T-cell (primary cell): ENCODE measurements at regions of chr1 and their contacts with region 1.

Region 1: GRCh38 chr1:116724765-116725375 is 29.4 kb upstream of the CD2 start:
- DNase-seq: peak; percentile 46 to 89 (median 71)
- ATAC-seq: peak; percentile 61 to 68 (median 62)
- H3K4me3 ChIP-seq: no peak overlapping the region
- H3K4me3 Mint-ChIP-seq: no peak overlapping the region
- H3K27ac ChIP-seq: no peak overlapping the region
- H3K27ac Mint-ChIP-seq: no peak overlapping the region
- H3K4me1 ChIP-seq: peaks cover 0 to 10% of the 10 kb centered on the region in 2 experiments
- H3K4me1 Mint-ChIP-seq: peaks cover 10 to 18% (median 17%) of the 10 kb centered on the region in 3 donors
- H3K27me3 ChIP-seq: peaks cover 0 to 2% of the 10 kb centered on the region in 2 experiments
- H3K27me3 Mint-ChIP-seq: no peaks in the 10 kb centered on the region

Region 2: DNA sequence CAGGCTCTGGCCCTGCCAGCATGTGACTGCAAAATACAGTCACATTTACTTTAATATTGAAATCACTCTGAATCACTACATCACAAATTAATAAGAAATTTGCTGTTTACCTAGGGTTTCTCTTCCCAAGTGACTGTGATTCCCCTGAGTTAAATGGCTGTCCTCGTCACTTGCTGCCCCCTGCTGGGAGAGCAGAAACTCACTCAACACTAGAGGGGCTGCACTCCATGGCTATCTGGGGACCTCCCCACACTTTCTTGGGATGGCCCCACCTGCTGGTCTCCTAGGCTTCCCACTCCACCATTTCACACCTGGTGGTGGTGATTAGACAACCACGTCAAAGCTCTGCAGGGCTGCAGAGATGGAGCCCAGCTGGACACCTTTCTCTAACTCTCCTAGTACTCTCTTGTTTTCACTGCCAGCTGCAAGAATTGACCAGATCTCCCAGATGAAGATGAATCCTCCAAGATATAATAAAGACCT is 92.8 kb after region 1 on chr1:
- CTCF ChIA-PET with region 1: interaction called in 1 of 2 experiments, 12 read pairs
- POLR2A ChIA-PET with region 1: no interaction called
- DNase-seq: peak; percentile 39 to 86 (median 60)
- ATAC-seq: peak; percentile 71 to 77 (median 74)
- H3K4me3 ChIP-seq: no peak overlapping the region
- H3K4me3 Mint-ChIP-seq: peak overlapping the region in 2 of 3 donors; percentile 34 to 70
- H3K27ac ChIP-seq: peak overlapping the region; percentile 61
- H3K27ac Mint-ChIP-seq: peak overlapping the region; percentile 64 to 80
- H3K4me1 ChIP-seq: peaks cover 23 to 27% of the 10 kb centered on the region in 2 experiments
- H3K4me1 Mint-ChIP-seq: peaks cover 28 to 33% (median 32%) of the 10 kb centered on the region in 3 donors
- H3K27me3 ChIP-seq: no peaks in the 10 kb centered on the region
- H3K27me3 Mint-ChIP-seq: no peaks in the 10 kb centered on the region

Region 3: DNA sequence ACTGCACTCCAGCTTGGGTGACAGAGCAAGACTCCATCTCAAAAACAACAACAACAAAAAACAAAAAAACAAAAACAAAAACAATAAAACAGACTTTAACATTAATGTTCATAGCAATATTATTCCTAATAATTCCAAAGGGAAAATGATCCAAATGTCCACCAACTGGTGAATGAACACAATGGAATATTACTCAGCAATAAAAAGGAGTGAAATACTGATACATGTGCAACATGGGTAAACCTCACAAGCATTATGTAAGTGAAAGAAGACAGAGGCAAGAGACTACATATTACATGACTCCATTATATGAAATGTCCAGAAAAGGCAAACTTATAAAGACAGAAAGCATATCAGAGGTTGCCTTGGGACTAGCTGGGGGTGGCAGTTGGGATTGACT is 329.2 kb after region 1 on chr1:
- CTCF ChIA-PET with region 1: interaction called, 8 to 10 read pairs
- POLR2A ChIA-PET with region 1: interaction called, 7 read pairs
- DNase-seq: no peak
- ATAC-seq: no peak
- H3K4me3 ChIP-seq: no peak overlapping the region
- H3K4me3 Mint-ChIP-seq: no peak overlapping the region
- H3K27ac ChIP-seq: no peak overlapping the region
- H3K27ac Mint-ChIP-seq: no peak overlapping the region
- H3K4me1 ChIP-seq: peaks cover 19 to 32% of the 10 kb centered on the region in 2 experiments
- H3K4me1 Mint-ChIP-seq: peaks cover 48 to 53% (median 51%) of the 10 kb centered on the region in 3 donors
- H3K27me3 ChIP-seq: no peaks in the 10 kb centered on the region
- H3K27me3 Mint-ChIP-seq: no peaks in the 10 kb centered on the region

Region 4: DNA sequence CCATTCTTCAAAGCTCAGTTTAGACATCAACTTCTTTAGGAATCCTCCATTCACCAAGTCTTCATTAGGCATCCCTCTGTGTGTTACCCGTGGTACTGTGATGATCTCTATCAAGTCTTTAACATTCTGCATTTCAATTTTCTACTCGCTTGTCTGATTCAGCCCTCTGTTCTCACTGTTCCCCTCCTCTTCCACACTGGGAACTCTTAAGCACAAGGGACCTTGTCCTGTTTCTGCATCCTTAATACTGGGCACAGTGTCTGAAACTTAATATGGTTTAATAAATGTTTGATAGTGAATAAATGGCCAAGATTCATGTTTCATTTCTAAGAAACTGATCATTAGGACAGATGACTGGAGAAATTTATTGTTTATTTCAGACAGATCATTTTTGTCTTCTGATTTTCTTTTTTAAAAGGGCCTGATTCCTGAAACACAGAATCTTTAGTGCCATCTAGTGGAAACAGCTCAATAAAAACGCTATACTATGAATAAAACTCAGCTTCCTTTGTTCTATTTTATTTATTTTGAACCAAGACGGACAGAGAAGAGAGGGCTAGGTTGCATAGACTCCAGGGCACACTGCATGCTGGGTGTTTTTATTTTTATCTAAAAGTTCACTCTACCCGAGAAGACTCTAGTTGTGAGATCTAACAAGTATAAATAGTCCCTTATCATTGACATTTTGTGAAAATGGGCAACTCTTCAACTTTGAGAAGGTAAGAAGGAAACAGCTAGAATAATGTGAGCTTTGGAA is 403.6 kb after region 1 on chr1:
- CTCF ChIA-PET with region 1: interaction called, 7 to 12 read pairs
- POLR2A ChIA-PET with region 1: no interaction called
- DNase-seq: peak in 1 of 35 experiments; percentile 52
- ATAC-seq: peak in 2 of 4 experiments; percentile 32 to 57
- H3K4me3 ChIP-seq: no peak overlapping the region
- H3K4me3 Mint-ChIP-seq: no peak overlapping the region
- H3K27ac ChIP-seq: no peak overlapping the region
- H3K27ac Mint-ChIP-seq: no peak overlapping the region
- H3K4me1 ChIP-seq: no peaks in the 10 kb centered on the region
- H3K4me1 Mint-ChIP-seq: peaks cover 0 to 2% (median 2%) of the 10 kb centered on the region in 3 donors
- H3K27me3 ChIP-seq: peaks cover 0 to 8% of the 10 kb centered on the region in 2 experiments
- H3K27me3 Mint-ChIP-seq: peaks cover 0 to 8% of the 10 kb centered on the region in 2 donors